ENCODE measurements at regions of chr14 and their contacts with region 1.

Region 1: DNA sequence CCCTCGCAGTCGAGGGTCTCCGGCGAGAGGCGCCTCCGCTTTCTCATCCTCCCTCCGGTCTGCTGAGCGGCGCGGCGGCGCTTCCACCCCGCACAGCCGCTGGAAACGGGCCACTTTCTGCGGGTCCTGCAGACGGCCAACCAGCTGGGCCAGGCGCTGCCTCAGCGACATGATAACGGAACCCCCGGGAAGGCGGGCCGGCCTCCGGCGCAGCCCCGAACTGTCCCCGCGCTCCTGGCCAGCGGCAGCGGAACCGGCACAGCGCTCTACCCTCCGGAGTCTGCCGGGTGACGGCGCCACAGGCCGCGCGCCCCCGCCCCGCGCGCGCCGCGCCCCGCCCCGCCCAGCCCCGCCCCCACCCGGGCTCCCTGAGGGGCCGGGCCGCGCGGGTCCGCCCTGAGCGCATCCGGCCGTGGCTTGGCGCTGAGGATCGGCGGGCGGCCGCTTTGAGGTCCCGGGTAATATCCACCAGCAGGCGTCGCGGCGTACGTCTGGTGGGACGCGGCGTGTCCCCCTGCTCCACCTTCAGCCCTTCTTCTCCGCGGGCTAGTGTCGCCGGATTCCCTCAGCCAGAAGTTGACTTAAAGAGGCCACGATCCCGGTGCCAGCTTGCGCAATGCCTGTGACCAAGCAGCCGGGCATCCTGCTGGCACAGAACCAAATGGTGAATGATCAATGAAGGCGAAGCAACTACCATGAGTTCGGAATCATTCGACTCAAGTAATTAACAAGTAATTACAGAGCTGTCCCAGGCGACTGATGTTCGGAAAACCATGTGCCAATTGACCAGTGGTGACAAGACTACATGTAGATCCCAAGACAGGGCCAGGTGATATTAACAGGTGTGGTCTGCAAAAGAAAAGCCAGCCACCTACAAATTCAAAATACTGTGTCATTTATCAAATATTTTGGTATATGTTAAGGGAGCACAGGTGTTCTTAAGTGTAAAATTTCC is at the start of gene SGPP1:
- DNase-seq: peak; percentile 65
- ATAC-seq: peak; percentile 87
- H3K4me3 ChIP-seq: peak within 1 kb of the TSS; percentile 70 to 92 (median 90)
- H3K27ac ChIP-seq: peak within 1 kb of the TSS; percentile 60
- H3K4me1 ChIP-seq: peaks cover 43% of the 10 kb centered on the region
- H3K27me3 ChIP-seq: no peaks in the 10 kb centered on the region
- CTCF ChIP-seq: peak; percentile 76
- EP300 ChIP-seq: no peak
- POLR2A ChIP-seq: peak; percentile 32 to 69; a peak in 3 of 4 replicates
- RAD21 ChIP-seq: peak; percentile 42; the same call in 1 of the 2 replicates
- total RNA-seq, gene SGPP1: 4.8 and 6.4 TPM in 2 replicates

Region 2: DNA sequence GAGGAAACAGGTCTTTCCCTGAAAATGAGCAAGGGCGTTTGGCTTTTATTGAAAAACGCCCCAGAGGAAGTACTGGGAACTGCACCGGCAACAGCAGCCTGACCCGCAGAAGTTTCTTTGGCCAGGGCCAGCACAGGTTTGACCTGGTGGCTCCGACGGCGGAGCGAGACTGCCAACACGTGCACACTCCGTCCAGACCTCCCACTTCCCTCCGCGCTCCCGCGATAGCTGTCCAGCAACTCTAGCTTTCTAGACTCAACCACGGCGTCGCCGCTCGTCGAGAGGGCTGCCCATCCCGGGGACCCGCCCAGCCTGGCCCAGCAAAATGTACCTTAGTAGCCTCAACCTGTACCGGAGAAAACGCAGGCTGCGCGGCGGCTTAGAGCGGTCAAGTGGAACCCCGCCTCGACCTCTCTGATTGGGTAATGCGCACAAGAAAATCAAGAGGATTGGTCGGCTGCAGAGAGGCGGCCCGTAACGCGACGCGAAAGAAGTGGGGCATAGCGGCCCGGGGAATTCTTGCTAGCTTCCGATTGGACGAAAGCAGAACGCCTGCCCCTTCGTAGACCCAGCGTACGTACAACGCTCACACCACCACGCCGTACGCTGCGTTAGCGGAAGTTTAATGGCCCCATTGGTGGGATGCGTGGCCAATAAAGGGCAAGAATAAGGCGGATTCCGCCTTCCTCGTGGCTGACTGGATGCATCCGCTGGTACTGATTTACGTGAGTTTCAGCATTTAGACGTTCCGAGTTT is 86.4 kb before region 1 on chr14 and contains the start of gene WDR89:
- CTCF ChIA-PET with region 1: no interaction called
- POLR2A ChIA-PET with region 1: interaction called, 3 read pairs
- in situ Hi-C with region 1: no loop called
- intact Hi-C with region 1: loop called (anchors 5 kb)
- DNase-seq: peak; percentile 99
- ATAC-seq: peak; percentile 96
- H3K4me3 ChIP-seq: peak within 1 kb of the TSS; percentile 66 to 77 (median 74)
- H3K27ac ChIP-seq: peak within 1 kb of the TSS; percentile 95
- H3K4me1 ChIP-seq: peaks cover 40% of the 10 kb centered on the region
- H3K27me3 ChIP-seq: no peaks in the 10 kb centered on the region
- CTCF ChIP-seq: peak; percentile 73
- EP300 ChIP-seq: 0 out of 4 replicates have a peak, but pooled peaks of 1 of the 2 experiments have one; percentile 12
- POLR2A ChIP-seq: peak; percentile 75 to 91
- RAD21 ChIP-seq: peak; percentile 69
- total RNA-seq, gene WDR89: 20.1 and 37.0 TPM in 2 replicates

Region 3: GRCh38 chr14:63760014-63760413 is 32.0 kb after region 1 on chr14:
- CTCF ChIA-PET with region 1: no interaction called
- POLR2A ChIA-PET with region 1: no interaction called
- in situ Hi-C with region 1: no loop called
- intact Hi-C with region 1: loop called (anchors 5 kb)
- DNase-seq: no peak
- ATAC-seq: no peak
- H3K4me3 ChIP-seq: no peak overlapping the region
- H3K27ac ChIP-seq: no peak overlapping the region
- H3K4me1 ChIP-seq: peaks cover 29% of the 10 kb centered on the region
- H3K27me3 ChIP-seq: no peaks in the 10 kb centered on the region
- CTCF ChIP-seq: no peak
- EP300 ChIP-seq: no peak
- POLR2A ChIP-seq: no peak
- RAD21 ChIP-seq: no peak

Region 4: DNA sequence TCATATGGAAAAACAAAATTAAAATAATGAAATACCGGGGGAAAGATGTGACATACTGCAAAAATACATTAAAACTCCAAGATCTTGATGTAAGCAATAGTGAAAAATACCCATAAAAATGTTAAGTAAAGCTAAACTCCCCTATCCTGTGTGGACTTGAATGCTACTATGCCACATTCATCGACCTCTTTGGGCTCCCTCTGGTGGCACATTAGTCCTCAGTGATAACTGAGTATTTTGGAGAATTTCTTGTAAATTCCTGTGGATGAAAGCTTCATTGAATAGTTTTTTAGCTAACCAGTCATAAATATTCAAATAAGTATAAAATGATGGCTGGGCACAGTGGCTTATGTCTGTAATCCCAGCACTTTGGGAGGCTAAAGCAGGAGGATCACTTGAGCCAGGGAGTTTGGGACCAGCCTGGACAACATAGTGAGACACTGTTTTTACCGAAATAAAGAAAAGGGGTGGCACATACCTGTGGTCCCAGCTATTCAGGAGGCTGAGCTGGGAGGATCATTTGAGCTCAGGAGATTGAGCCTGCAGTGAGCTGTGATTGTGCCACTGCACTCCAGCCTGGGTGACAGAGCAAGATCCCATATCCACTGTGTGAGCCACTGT is 42.2 kb after region 1 on chr14:
- CTCF ChIA-PET with region 1: interaction called, 9 read pairs
- POLR2A ChIA-PET with region 1: no interaction called
- in situ Hi-C with region 1: no loop called
- intact Hi-C with region 1: loop called (anchors 2 kb)
- DNase-seq: peak; percentile 57
- ATAC-seq: peak; percentile 91
- H3K4me3 ChIP-seq: no peak overlapping the region
- H3K27ac ChIP-seq: no peak overlapping the region
- H3K4me1 ChIP-seq: peaks cover 22% of the 10 kb centered on the region
- H3K27me3 ChIP-seq: no peaks in the 10 kb centered on the region
- CTCF ChIP-seq: peak; percentile 68
- EP300 ChIP-seq: no peak
- POLR2A ChIP-seq: no peak
- RAD21 ChIP-seq: peak; percentile 42; the same call in 1 of the 2 replicates